Activated T-helper 1 cell treated with anti-CD3 and anti-CD28 coated beads, Interleukin-12 subunit alpha, Interleukin-12 subunit beta, Interleukin-2, Interleukin-4 antibody, amounts not matched to agents 30 ng/mL and 10 ng/mL and 1 ng/mL, durations not matched to agents 14 hours and 24 hours and 36 hours (primary cell): ENCODE measurements at regions of chr22 and their contacts with region 1.

Region 1: GRCh38 chr22:28855355-28856094 is 27.8 kb upstream of the ZNRF3 start:
- DNase-seq: peak; percentile 11
- H3K4me3 Mint-ChIP-seq: no peak overlapping the region
- H3K27ac Mint-ChIP-seq: no peak overlapping the region
- H3K4me1 Mint-ChIP-seq: no peaks in the 10 kb centered on the region
- H3K27me3 Mint-ChIP-seq: peaks cover 8% of the 10 kb centered on the region

Region 2: GRCh38 chr22:28607795-28608194 is 247.7 kb before region 1 on chr22:
- intact Hi-C with region 1: no loop called
- DNase-seq: no peak
- H3K4me3 Mint-ChIP-seq: no peak overlapping the region
- H3K27ac Mint-ChIP-seq: no peak overlapping the region
- H3K4me1 Mint-ChIP-seq: no peaks in the 10 kb centered on the region
- H3K27me3 Mint-ChIP-seq: peaks cover 61% of the 10 kb centered on the region

Region 3: GRCh38 chr22:29040385-29041275 is 185.1 kb after region 1 on chr22:
- intact Hi-C with region 1: loop called (anchors 1 kb)
- DNase-seq: peak; percentile 44
- H3K4me3 Mint-ChIP-seq: no peak overlapping the region
- H3K27ac Mint-ChIP-seq: no peak overlapping the region
- H3K4me1 Mint-ChIP-seq: no peaks in the 10 kb centered on the region
- H3K27me3 Mint-ChIP-seq: peaks cover 12% of the 10 kb centered on the region

Region 4: DNA sequence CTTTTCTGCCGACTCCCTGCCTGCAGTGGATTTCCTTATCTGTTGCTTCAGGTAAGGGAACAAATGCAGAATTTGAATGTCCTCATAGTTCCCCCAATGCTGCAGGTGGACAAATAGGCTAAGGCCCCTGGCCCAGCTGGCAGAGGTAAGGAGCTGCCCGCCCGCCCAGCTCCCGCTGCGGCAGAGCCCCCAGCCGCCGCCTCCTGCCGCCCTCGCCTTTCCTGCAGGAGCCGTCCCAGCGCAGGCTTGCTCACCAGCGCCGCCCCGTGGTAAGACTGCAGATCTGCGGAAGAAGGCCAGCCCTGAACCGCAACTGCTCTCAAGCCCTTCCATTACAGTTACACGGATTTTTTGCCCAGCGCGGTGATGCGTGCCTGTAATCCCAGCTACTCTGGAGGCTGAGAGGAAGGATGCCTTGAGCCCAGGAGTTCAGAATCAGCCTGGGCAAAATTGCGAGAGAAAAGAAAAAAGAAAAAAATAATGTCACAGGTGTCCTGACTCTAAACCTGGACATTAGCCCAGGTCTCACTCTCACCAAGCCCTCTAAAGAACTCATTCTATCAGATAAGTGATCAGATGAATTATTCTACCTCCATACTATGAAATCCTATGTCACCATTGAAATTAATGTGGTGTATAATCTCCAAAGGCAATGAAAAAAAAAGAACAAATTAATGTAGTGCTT is 299.0 kb after region 1 on chr22:
- intact Hi-C with region 1: loop called (anchors 2 kb)
- DNase-seq: peak; percentile 64
- H3K4me3 Mint-ChIP-seq: no peak overlapping the region
- H3K27ac Mint-ChIP-seq: no peak overlapping the region
- H3K4me1 Mint-ChIP-seq: peaks cover 8% of the 10 kb centered on the region
- H3K27me3 Mint-ChIP-seq: peaks cover 21% of the 10 kb centered on the region